Activated CD4-positive, alpha-beta memory T cell treated with anti-CD3 and anti-CD28 coated beads for 36 hours (primary cell): ENCODE measurements at regions of chr6 and their contacts with region 1.

Region 1: DNA sequence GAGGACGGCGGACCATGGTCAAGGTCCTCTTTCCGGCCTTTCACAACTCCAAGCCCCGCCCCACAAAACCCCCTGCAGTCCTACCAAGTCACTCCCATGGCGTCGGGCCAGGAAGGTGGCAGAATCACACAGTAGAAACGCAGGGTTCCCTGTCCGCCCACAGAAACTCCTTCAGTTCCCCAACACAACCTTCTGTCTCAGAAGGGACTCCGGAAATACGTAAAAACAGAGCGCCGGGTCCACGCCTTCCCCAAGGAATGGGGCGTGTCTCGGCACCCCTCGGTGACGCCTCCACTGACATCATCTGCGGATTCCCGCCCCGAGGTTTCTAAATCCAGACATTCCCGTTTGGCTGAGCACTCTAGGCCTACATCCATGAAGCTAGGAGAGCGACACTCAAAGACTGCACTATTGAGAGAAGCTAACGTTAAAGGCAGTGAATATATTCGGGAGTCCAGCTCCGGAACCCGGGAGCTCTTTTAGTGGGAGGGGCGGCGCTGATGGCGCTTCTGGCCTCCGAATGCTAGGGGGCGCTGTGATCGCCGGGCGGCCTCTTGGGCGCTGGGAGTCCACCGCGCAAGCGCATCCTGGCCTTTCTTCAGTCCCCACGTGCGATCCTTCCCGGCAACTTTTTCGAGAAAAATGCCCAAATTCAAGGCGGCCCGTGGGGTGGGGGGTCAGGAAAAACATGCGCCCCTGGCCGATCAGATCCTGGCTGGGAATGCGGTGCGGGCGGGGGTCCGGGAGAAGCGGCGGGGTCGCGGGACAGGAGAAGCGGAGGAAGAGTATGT is at the starts of genes BYSL and MED20:
- DNase-seq: peak; percentile 96
- H3K4me3 Mint-ChIP-seq: peak within 1 kb of the TSS; percentile 93
- H3K27ac Mint-ChIP-seq: peak within 1 kb of the TSS; percentile 96
- H3K4me1 Mint-ChIP-seq: peaks cover 49% of the 10 kb centered on the region
- H3K27me3 Mint-ChIP-seq: no peaks in the 10 kb centered on the region
- total RNA-seq, gene BYSL: 46.6 to 51.0 TPM
- total RNA-seq, gene MED20: 18.2 to 18.3 TPM

Region 2: GRCh38 chr6:41735427-41736356 is 185.4 kb before region 1 on chr6 and contains the start of gene TFEB:
- CTCF ChIA-PET with region 1: no interaction called
- POLR2A ChIA-PET with region 1: no interaction called
- intact Hi-C with region 1: loop called (anchors 2 kb)
- DNase-seq: peak; percentile 95
- H3K4me3 Mint-ChIP-seq: peak within 1 kb of the TSS; percentile 67
- H3K27ac Mint-ChIP-seq: peak within 1 kb of the TSS; percentile 18
- H3K4me1 Mint-ChIP-seq: peaks cover 27% of the 10 kb centered on the region
- H3K27me3 Mint-ChIP-seq: no peaks in the 10 kb centered on the region
- total RNA-seq, gene TFEB: 11.7 to 13.4 TPM

Region 3: GRCh38 chr6:41767156-41767833 is 153.8 kb before region 1 on chr6:
- CTCF ChIA-PET with region 1: no interaction called
- POLR2A ChIA-PET with region 1: no interaction called
- intact Hi-C with region 1: no loop called
- DNase-seq: no peak
- H3K4me3 Mint-ChIP-seq: no peak overlapping the region
- H3K27ac Mint-ChIP-seq: no peak overlapping the region
- H3K4me1 Mint-ChIP-seq: no peaks in the 10 kb centered on the region
- H3K27me3 Mint-ChIP-seq: no peaks in the 10 kb centered on the region

Region 4: GRCh38 chr6:41895300-41896233 is 25.5 kb before region 1 on chr6 and contains the start of gene USP49:
- CTCF ChIA-PET with region 1: interaction called, 30 read pairs
- POLR2A ChIA-PET with region 1: interaction called, 7 read pairs
- intact Hi-C with region 1: loop called (anchors 1 kb)
- DNase-seq: peak; percentile 94
- H3K4me3 Mint-ChIP-seq: no peak within 1 kb of the TSS
- H3K27ac Mint-ChIP-seq: peak within 1 kb of the TSS; percentile 89
- H3K4me1 Mint-ChIP-seq: peaks cover 9% of the 10 kb centered on the region
- H3K27me3 Mint-ChIP-seq: no peaks in the 10 kb centered on the region
- total RNA-seq, gene USP49: 6.1 to 6.3 TPM

Region 5: DNA sequence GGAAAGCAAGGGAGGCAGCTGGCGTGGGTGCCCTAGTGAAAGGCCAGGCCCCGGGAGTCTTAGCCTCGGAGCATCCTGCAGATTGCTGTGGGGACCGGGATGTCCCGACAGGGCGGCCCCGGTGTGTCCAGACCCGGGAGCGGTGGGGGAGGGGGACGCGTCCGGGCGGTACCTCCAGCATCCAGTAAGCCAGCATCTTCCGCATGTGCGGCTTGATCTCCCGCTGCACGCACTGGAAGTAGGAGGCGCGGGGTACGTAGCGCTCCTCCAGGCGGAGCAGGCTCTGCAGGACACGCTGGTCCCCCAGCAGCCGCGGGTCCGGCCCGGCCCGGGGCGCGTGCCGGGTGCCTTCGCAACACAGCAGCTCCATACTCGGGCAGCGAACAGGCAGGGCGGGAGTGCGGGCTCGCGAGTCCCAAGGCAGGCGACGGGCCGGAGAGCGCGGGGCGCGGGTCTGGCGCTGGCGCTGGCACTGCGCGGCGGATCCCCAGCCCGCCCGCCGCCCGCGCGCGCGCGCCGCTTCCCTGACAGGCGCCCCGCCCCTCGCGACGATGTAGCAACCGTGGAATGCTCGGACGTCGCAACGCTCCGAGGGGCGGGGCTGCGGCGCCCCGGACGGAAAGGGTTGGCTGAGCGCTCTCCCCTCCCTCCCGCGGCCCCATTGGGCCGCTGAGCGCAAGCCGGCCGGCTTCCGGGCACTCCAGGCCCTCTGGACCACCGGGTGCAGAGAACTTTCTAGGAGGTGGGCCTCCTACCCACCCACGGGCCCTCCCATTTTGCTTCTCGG is 20.4 kb after region 1 on chr6 and contains the start of gene CCND3:
- CTCF ChIA-PET with region 1: interaction called, 78 read pairs
- POLR2A ChIA-PET with region 1: interaction called, 17 read pairs
- intact Hi-C with region 1: loop called (anchors 1 kb)
- DNase-seq: peak; percentile 94
- H3K4me3 Mint-ChIP-seq: peak within 1 kb of the TSS; percentile 99
- H3K27ac Mint-ChIP-seq: peak within 1 kb of the TSS; percentile 94
- H3K4me1 Mint-ChIP-seq: peaks cover 50% of the 10 kb centered on the region
- H3K27me3 Mint-ChIP-seq: no peaks in the 10 kb centered on the region
- total RNA-seq, gene CCND3: 570 to 573 TPM

Region 6: GRCh38 chr6:42038811-42039408 is 117.8 kb after region 1 on chr6:
- CTCF ChIA-PET with region 1: interaction called, 156 read pairs
- POLR2A ChIA-PET with region 1: interaction called, 6 read pairs
- intact Hi-C with region 1: loop called (anchors 1 kb)
- DNase-seq: no peak
- H3K4me3 Mint-ChIP-seq: peak overlapping the region; percentile 78
- H3K27ac Mint-ChIP-seq: peak overlapping the region; percentile 96
- H3K4me1 Mint-ChIP-seq: peaks cover 67% of the 10 kb centered on the region
- H3K27me3 Mint-ChIP-seq: no peaks in the 10 kb centered on the region

Region 7: DNA sequence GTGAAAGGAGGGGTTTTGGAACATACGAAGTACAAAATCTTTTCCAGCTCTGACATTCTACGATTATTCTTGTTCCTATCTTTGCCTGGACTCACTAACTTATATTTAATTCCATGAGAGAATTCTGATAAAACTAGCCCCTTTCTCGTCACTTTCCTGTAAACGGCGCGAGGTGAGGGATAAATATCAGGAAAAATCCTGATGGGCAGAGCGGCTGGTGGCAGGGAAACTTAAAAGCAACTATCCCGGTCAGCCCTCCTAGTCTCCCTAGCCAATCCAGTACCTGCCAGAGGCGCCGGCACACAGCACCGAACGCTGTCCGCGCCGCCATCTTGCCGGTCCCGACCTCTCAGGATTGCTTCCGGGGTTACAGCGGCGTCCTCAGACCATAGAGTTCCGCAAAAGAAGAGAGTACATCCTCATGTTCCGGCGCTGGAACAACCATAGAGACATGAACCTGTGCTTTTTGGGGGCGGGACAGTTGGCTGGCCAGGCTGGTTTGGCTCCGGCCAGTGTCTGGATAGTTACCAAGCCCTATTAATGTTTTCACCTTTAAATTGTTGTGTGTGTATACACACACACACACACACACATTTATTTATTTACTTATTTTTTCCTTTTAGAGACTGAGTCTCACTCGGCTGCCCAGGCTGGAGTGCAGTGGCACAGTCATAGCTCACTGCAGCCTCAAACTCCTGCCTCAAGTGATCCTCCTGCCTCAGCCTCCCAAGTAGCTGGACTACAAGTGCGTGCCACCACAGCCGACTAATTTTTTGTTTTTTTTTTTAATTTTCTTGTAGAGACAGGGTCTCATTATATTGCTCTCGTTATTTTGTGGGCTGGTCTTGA is 296.6 kb after region 1 on chr6 and contains the start of gene MRPS10:
- CTCF ChIA-PET with region 1: interaction called, 3 read pairs
- POLR2A ChIA-PET with region 1: no interaction called
- intact Hi-C with region 1: loop called (anchors 5 kb)
- DNase-seq: peak; percentile 95
- H3K4me3 Mint-ChIP-seq: peak within 1 kb of the TSS; percentile 99
- H3K27ac Mint-ChIP-seq: peak within 1 kb of the TSS; percentile 94
- H3K4me1 Mint-ChIP-seq: peaks cover 39% of the 10 kb centered on the region
- H3K27me3 Mint-ChIP-seq: no peaks in the 10 kb centered on the region
- total RNA-seq, gene MRPS10: 38.6 to 40.3 TPM